Sigmoid colon (tissue), 7 donors: ENCODE measurements at regions of chr7 and their contacts with region 1.

Region 1: DNA sequence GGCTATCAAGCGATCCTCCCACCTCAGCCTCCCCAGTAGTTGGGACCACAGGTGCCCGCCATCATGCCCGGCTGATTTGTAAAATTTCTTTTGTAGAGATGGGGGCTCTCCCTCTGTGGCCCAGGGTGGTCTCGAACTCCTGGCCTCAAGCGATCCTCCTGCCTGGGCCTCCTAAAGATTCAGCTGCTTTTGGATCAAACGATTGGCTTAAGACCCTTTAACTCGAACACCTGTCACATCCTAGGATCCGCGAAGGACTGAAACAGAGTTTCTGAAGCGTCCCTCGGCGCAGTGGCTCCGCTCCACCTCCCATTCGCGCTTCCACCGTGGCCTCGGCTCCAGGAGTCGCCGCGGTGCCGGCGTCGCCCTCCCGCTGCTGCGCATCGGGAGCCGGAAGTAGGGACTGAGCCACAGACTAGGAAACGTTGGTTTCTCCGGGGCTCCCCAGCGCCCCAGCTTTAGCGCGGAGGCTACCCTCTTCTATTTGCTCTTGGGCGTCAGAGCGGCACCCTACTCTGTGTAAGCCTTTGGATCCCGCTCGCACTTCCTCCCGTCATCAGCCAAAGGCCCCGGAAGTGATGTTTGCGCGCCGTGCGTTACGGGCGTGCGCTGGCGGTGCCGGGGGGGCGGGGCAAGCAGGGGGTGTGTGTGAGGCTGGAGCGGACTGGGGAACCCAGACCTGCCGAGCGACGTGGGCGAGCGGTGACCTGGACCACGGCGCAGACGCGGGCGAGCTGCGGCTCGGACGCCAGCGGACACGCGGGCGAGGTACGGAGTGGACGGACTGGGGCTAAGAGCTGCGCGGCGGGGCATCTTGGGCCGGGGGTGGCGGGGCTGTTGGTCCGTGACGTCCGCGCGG is 53.0 kb downstream of the KCTD7 start:
- DNase-seq: peak; percentile 99
- H3K4me3 ChIP-seq: peak overlapping the region; percentile 77 to 96 (median 92)
- H3K27ac ChIP-seq: peak overlapping the region; percentile 98 to 99 (median 98)
- H3K4me1 ChIP-seq: peaks cover 0 to 25% (median 17%) of the 10 kb centered on the region in 4 donors
- H3K27me3 ChIP-seq: no peaks in the 10 kb centered on the region
- CTCF ChIP-seq: no peak
- EP300 ChIP-seq: peak in 1 of 4 donors; percentile 76
- POLR2A ChIP-seq: peak; percentile 97 to 98

Region 2: DNA sequence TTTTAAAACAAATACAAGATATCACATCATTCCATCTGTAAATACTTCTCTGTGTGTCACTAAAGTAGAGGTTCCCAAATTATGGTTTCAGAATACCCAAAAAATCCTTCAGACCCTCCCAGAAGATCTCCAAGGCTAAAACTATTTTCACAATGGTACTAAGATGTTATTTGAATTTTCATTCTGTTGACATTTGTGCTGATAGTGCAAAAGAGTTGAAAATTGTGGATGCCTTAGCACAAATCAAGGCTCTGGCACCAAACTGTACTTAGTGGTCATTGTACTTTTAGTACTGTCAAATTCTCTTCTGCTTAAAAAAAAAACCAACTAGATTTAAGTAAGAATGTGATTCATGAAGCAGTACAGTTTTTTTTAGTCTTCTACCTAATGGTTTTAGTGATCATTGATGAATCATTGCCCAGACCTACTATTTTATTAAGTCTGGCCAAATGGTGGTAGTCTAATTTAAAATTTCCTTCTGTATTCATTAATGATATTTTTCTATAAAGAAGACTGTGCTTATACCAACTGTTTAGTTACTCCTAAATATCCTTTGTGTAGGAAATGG is 426.1 kb before region 1 on chr7:
- intact Hi-C with region 1: no loop called
- DNase-seq: no peak
- H3K4me3 ChIP-seq: no peak overlapping the region
- H3K27ac ChIP-seq: no peak overlapping the region
- H3K4me1 ChIP-seq: peaks cover 0 to 5% (median under 1%) of the 10 kb centered on the region in 4 donors
- H3K27me3 ChIP-seq: no peaks in the 10 kb centered on the region
- CTCF ChIP-seq: no peak
- EP300 ChIP-seq: no peak
- POLR2A ChIP-seq: no peak

Region 3: DNA sequence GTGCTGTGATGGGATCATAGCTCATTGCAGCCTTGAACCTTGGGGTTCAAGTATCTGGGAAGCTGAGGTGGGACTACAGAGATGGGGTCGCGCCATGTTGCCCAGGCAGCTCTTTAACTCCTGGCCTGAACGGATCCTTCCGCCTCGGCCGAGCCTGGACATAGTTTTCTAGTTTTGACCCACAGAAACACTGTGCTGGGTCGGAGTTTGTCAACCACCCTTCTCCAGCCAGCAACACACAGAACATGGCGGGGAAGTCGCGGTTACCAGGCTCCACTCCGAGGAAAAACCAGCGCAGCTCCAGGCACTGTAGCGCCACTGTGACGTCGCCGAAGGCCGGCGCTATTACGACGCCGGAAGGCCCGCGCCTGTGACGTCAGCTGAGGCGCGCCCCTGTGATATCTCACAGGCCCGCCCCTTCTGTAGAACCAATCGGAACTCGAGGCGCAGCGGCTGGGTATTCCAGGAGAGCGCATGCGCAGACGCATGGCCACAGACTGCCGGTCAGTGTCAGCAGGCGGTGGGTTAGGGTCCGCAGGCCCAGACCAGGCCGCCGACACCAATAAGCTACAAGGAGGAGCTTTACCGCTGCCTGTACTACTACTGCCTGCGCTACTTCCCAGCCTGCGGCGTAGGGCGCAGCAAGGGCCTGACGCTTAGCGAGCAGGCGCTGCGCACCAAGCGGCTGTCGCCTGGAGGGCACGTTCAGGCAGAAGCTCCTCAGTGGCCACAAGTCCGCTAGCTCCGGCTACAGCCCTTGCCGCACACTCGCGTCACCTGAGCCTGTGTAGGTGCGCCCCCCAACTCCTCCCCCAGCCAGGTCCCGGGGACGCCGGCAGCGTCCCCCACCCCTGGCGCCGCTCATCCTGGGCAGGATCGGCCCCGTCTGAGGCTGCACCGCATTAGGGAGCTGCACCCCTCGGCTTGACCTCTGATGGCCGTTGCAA is 188.2 kb before region 1 on chr7:
- intact Hi-C with region 1: loop called (anchors 2 kb)
- DNase-seq: peak; percentile 99
- H3K4me3 ChIP-seq: peak overlapping the region; percentile 62 to 78 (median 76)
- H3K27ac ChIP-seq: peak overlapping the region; percentile 82 to 96 (median 91)
- H3K4me1 ChIP-seq: peaks cover 0 to 17% (median 15%) of the 10 kb centered on the region in 4 donors
- H3K27me3 ChIP-seq: no peaks in the 10 kb centered on the region
- CTCF ChIP-seq: peak in 3 of 4 experiments; percentile 34 to 47 (median 40)
- EP300 ChIP-seq: peak in 1 of 4 donors; percentile 34
- POLR2A ChIP-seq: peak; percentile 92

Region 4: DNA sequence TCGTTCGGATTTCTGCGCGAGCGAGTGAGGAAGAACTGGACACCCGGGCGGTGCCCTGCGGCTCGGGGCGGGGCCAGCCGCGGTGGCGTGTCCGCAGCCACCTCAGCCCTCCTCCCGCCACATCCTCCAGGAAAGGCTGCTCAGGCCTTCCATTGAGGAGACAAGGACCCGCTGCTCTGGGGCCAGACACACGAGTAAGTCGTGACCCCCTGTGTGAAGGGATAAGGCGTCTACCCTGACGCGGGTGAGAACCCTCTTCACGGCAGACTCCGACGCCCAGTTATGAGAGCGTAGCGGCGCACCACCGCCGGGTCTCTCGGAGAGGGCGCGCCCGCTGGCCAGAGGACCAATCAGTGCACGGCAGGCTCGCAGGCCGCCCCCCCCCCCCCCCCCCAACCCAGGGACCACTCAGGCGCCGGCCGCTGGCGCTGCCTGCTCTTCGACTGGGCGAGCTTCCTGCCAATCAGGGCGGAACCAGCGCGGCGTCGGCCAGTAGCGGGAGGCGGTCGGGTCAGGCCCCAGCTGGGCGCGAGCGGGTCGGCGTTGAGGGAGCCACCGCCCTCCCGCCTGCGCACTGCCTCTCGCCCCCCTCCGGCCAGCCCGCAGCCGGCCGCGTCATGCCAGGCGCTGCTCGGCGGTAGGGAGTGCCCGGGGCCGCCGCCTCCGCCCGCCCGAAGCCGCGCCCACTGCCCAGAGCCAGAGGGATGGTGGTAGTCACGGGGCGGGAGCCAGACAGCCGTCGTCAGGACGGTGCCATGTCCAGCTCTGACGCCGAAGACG is 53.2 kb before region 1 on chr7 and contains the start of gene KCTD7:
- intact Hi-C with region 1: loop called (anchors 2 kb)
- DNase-seq: peak; percentile 99
- H3K4me3 ChIP-seq: peak within 1 kb of the TSS; percentile 64 to 90 (median 72)
- H3K27ac ChIP-seq: peak within 1 kb of the TSS; percentile 95 to 97 (median 96)
- H3K4me1 ChIP-seq: peaks cover 0 to 48% (median 36%) of the 10 kb centered on the region in 4 donors
- H3K27me3 ChIP-seq: no peaks in the 10 kb centered on the region
- CTCF ChIP-seq: no peak
- EP300 ChIP-seq: no peak
- POLR2A ChIP-seq: peak; percentile 98 to 99
- total RNA-seq, gene KCTD7: 15.3 to 23.3 (median 19.6) TPM

Region 5: GRCh38 chr7:66697449-66698438 is 16.0 kb after region 1 on chr7:
- intact Hi-C with region 1: loop called (anchors 1 kb)
- DNase-seq: peak; percentile 82
- H3K4me3 ChIP-seq: no peak overlapping the region
- H3K27ac ChIP-seq: peak overlapping the region; percentile 46 to 78 (median 68)
- H3K4me1 ChIP-seq: peaks cover 0 to 31% (median 31%) of the 10 kb centered on the region in 4 donors
- H3K27me3 ChIP-seq: no peaks in the 10 kb centered on the region
- CTCF ChIP-seq: no peak
- EP300 ChIP-seq: no peak
- POLR2A ChIP-seq: no peak

Region 6: DNA sequence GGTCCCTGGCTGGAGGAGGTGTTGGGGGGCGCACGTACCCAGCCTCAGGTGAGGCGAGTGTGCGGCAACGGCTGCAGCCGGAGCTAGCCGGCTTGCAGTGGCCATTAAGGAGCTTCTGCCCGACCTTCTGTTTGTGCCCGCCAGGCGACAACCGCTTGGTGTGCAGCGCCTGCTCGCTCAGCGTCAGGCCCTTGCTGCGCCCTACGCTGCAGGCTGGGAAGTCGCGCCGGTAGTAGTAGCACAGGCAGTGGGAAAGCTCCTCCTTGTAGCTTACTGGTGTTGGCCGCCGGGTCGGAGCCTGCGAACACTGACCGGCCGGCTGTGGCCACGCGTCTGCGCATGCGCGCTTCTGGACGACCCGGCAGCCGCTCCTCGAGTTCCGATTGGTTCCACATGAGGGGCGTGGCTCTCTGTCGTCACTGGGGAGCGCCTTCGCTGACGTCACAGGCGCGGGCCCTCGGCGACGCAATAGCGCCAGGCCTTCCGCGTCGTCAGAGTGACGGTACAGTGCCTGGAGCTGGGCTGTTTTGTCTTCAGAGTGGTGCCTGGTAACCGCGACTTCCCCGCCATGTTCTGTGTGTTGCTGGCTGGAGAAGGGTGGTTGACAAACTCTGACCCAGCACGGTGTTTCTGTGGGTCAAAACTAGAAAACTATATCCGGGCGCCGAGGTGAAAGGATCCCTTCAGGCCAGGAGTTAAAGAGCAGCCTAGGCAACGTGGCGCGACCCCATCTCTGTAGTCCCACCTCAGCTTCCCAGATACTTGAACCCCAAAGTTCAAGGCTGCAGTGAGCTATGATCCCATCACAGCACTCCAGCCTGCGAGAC is 163.0 kb after region 1 on chr7:
- intact Hi-C with region 1: loop called (anchors 10 kb)
- DNase-seq: peak; percentile 99
- H3K4me3 ChIP-seq: peak overlapping the region; percentile 51 to 94 (median 72)
- H3K27ac ChIP-seq: peak overlapping the region; percentile 81 to 96 (median 93)
- H3K4me1 ChIP-seq: peaks cover 0 to 19% (median 14%) of the 10 kb centered on the region in 4 donors
- H3K27me3 ChIP-seq: no peaks in the 10 kb centered on the region
- CTCF ChIP-seq: peak; percentile 38 to 61 (median 44)
- EP300 ChIP-seq: peak in 2 of 4 donors; percentile 70 to 75
- POLR2A ChIP-seq: peak; percentile 94 to 95